A549 (cell line): ENCODE measurements at regions of chr19 and their contacts with region 1.

Region 1: DNA sequence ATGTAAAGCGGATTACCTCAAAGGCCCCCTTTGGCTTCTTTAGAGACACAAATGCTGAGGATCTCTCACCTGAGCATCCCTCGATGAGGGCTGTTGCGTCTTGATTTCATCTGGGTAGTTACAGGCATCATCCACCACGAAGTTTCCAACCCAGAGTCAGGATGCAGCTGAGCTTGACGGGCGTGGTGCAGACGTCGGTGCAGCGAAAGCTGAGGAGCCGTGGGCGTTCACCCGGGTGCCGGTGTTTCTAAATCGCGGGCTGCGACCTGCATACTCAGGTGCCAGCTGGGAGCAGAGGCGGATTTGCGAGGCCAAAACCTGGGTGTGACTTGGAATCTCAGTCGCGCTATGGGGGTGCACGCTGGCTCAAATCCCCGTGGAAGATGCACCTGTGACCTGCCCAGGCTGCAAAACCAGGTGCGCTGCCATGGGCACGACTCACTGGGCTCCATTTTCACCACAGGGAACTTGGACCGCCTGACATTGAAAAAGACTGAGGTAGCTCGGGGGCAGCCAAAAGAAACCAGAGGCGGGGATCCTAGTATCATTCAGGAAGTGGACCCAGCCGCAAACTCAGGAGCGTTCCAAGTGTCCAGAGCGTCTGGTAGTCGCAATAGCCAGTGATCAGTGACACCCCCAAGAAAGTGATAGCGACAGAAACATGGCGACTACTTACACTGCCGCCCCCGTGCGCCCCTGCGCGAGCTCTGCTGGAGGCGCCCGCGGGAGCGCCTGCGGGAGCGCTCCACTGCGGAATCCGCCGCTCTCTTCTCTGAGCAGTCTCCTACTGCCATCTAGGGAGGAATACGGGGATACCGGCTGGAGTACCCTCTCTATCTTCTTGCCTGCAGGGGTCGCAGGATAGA is 36.4 kb upstream of the IGFL4 start:
- DNase-seq: peak; percentile 90 to 95
- ATAC-seq: peak; percentile 94 to 95
- H3K4me3 ChIP-seq: peak overlapping the region; percentile 59
- H3K27ac ChIP-seq: peak overlapping the region; percentile 72 to 86
- H3K4me1 ChIP-seq: peaks cover 45% of the 10 kb centered on the region
- CTCF ChIP-seq: peak; percentile 100
- EP300 ChIP-seq: no peak
- POLR2A ChIP-seq: no peak
- RAD21 ChIP-seq: peak; percentile 99 to 100

Region 2: DNA sequence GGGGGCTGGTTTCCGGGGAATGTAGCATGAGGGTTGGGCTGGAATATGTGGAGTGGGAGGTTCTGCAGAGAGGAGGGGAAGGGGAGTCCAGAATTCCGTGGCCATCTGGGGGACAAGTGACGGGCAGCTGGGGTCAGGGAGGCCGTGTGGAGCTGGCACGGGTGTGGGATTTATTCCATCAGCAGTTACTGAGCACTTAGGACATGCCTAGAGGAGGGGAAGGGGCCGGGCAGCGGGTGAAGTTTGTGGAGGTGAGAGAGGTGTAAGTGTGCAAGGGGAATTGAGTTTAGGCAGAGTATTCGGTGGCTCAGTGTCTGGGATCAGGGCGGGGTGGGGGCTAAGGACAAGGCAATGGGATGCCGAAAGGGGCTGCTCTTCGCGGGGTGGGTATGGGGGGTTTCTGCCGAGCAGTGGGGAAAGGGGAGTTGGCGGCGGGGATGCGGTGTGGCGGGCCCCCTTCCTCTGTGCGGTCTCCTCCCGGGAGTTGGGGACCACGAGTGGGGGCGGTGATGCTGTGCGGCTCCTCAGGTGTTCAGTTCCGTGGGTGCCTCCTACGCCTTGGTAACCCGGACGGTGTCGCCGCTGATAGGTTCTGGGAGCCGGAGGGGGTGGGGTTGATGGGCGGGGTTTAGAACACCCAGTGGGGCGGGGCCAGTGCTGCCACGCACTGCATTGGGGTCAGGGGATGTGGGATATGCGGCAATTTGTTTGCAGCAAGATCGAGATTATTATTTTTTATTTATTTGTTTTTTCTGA is 76.5 kb before region 1 on chr19:
- CTCF ChIA-PET with region 1: interaction called, 21 read pairs
- POLR2A ChIA-PET with region 1: no interaction called
- DNase-seq: no peak
- ATAC-seq: peak in 1 of 2 experiments; percentile 18; a peak in 3 of 6 replicates
- H3K4me3 ChIP-seq: no peak overlapping the region
- H3K27ac ChIP-seq: no peak overlapping the region
- H3K4me1 ChIP-seq: peaks cover 5% of the 10 kb centered on the region
- CTCF ChIP-seq: no peak
- EP300 ChIP-seq: no peak
- POLR2A ChIP-seq: no peak
- RAD21 ChIP-seq: no peak

Region 3: GRCh38 chr19:46090444-46090843 is 13.3 kb after region 1 on chr19:
- CTCF ChIA-PET with region 1: interaction called, 55 read pairs
- POLR2A ChIA-PET with region 1: no interaction called
- DNase-seq: no peak
- ATAC-seq: no peak
- H3K4me3 ChIP-seq: no peak overlapping the region
- H3K27ac ChIP-seq: no peak overlapping the region
- H3K4me1 ChIP-seq: no peaks in the 10 kb centered on the region
- CTCF ChIP-seq: no peak
- EP300 ChIP-seq: no peak
- POLR2A ChIP-seq: no peak
- RAD21 ChIP-seq: no peak

Region 4: DNA sequence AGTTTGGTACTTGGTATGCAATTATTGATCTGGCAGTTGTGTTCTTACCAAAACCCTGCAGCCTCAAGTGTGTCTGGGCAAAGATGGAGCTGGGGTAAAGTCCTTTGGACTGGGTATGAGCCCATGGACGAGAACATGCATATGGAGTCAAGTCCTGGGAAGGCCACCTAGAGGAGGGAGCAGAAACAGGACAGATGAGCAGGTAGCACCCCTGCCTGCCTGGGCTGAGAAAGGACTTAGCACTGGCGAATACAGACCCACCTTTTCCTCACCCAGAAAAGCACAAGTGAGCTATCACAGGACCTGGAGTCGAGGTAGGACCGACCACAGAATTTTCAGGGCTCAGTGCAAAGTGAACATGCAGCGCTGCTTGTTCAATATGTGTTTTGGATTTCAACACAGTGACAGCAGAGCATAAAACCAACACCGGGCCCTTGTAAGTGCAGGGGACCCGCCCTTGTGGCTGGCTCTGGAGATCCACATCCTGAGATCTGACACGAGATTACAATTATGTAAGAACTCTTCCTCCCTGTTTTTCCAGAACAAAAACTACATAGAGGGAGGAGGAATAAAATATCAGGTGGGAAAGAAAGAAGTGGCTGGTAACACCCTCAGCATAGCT is 96.8 kb after region 1 on chr19:
- CTCF ChIA-PET with region 1: interaction called, 38 read pairs
- POLR2A ChIA-PET with region 1: no interaction called
- DNase-seq: no peak
- ATAC-seq: peak; percentile 52 to 70; a peak in 4 of 6 replicates
- H3K4me3 ChIP-seq: no peak overlapping the region
- H3K27ac ChIP-seq: no peak overlapping the region
- H3K4me1 ChIP-seq: peaks cover 1% of the 10 kb centered on the region; the same call in 1 of the 3 replicates
- CTCF ChIP-seq: no peak
- EP300 ChIP-seq: no peak
- POLR2A ChIP-seq: no peak
- RAD21 ChIP-seq: no peak

Region 5: GRCh38 chr19:46201413-46202310 is 124.5 kb after region 1 on chr19:
- CTCF ChIA-PET with region 1: interaction called, 390 read pairs
- POLR2A ChIA-PET with region 1: no interaction called
- DNase-seq: peak in 1 of 2 experiments; percentile 38
- ATAC-seq: 0 out of 6 replicates have a peak, but pooled peaks of 1 of the 2 experiments have one; percentile 6
- H3K4me3 ChIP-seq: peak overlapping the region; percentile 36
- H3K27ac ChIP-seq: peak overlapping the region; percentile 83 to 90
- H3K4me1 ChIP-seq: peaks cover 89% of the 10 kb centered on the region
- CTCF ChIP-seq: no peak
- EP300 ChIP-seq: no peak
- POLR2A ChIP-seq: no peak
- RAD21 ChIP-seq: no peak

Region 6: GRCh38 chr19:46265217-46265828 is 188.1 kb after region 1 on chr19:
- CTCF ChIA-PET with region 1: interaction called, 854 read pairs
- POLR2A ChIA-PET with region 1: interaction called, 4 read pairs
- DNase-seq: peak; percentile 86 to 91
- ATAC-seq: peak; percentile 89 to 95
- H3K4me3 ChIP-seq: no peak overlapping the region
- H3K27ac ChIP-seq: peak overlapping the region; percentile 14 to 70; a peak in 5 of 6 replicates
- H3K4me1 ChIP-seq: peaks cover 19% of the 10 kb centered on the region
- CTCF ChIP-seq: peak; percentile 99
- EP300 ChIP-seq: no peak
- POLR2A ChIP-seq: no peak
- RAD21 ChIP-seq: peak; percentile 99